Ascending aorta (tissue), 2 donors: ENCODE measurements at regions of chr16 and their contacts with region 1.

Region 1: DNA sequence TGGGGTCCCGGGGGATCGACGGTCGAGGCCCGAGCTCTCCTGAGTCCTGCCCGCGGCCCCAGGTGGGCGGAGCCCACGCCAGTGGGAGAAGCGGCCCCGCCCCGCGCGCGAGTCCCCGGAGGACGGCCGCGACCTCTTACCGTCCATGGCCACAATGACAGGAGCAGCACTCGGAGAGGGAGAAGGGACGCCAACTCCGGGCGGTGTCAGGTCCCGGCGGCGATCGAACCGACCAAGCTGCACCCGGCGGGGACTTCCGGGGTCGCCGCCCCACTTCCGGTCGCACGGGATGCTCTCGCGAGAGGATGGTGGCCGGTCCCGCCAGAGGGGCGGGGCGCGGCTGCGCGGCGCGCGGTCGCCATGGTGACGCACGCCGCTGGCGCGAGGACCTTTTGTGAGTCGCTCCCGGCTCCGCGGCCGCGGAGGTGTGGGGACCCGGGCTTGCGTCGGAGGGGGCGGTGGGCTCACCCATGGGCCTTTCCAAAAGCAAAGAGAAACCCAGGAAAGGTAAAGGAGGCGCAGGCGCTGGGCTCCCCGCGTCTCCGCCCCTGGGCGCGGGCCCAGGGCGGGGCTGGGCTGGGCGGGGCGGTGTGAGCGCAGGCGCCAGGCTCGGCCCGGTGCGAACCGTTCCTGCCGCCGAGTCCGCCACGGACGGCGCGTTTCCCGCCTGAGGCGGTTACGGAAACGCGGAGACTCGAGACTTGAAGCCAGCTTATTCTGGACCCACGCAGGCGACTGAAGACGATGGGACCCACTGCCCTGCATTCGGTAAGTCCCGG is at the starts of genes CHMP1A and SPATA33:
- DNase-seq: peak; percentile 30 to 92
- H3K4me3 ChIP-seq: peak within 1 kb of the TSS; percentile 78 to 95
- H3K27ac ChIP-seq: peak within 1 kb of the TSS; percentile 72 to 93
- H3K4me1 ChIP-seq: peaks cover 3 to 15% of the 10 kb centered on the region in 2 donors
- H3K27me3 ChIP-seq: no peaks in the 10 kb centered on the region
- CTCF ChIP-seq: no peak
- total RNA-seq, gene CHMP1A: 153 TPM
- total RNA-seq, gene SPATA33: 0.21 TPM

Region 2: DNA sequence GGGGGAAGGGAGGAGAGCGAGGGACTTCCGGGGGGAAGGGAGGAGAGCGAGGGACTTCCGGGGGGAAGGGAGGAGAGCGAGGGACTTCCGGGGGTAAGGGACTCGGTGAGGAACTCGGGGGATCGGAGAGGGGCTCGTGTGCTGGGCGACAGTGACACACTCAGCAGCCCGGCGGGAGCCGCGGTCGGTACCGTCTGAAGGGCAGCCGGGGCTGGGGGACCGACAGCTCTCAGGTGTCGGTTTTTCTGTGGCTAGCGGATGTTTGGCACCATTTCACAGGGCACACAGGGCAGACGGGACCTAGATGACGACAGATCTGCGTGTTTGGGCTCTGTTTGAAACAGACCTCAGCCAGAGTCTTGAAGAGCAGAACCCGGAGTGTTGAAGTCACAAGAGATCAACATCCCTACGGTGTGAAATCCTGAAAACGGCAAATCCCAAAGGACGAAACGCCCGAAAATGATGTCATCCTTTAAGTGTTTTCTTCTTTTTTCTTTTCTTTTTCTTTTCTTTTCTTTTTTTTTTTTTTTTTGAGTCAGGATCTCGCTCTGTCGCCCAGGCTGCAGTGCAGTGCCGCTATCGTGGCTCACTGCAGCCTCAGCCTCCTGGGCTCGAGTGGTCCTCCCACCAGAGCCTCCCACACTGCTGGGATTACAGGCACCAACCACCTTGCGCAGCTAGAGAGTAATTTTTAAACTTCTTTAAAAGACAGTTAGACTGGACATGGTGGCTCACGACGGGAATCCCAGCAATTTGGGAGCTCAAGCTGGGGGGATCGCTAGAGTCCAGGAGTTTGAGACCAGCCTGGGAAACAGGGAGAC is 416.2 kb before region 1 on chr16:
- intact Hi-C with region 1: loop called (anchors 10 kb)
- DNase-seq: peak in 1 of 2 donors; percentile 87
- H3K4me3 ChIP-seq: peak overlapping the region; percentile 70 to 79
- H3K27ac ChIP-seq: peak overlapping the region; percentile 95 to 98
- H3K4me1 ChIP-seq: peaks cover 0 to 6% of the 10 kb centered on the region in 2 donors
- H3K27me3 ChIP-seq: no peaks in the 10 kb centered on the region
- CTCF ChIP-seq: no peak

Region 3: GRCh38 chr16:89560378-89561141 is 97.1 kb before region 1 on chr16 and contains the start of gene RPL13:
- intact Hi-C with region 1: loop called (anchors 2 kb)
- DNase-seq: peak; percentile 82 to 98
- H3K4me3 ChIP-seq: peak within 1 kb of the TSS; percentile 66 to 74
- H3K27ac ChIP-seq: peak within 1 kb of the TSS; percentile 95 to 96
- H3K4me1 ChIP-seq: peaks cover 17% of the 10 kb centered on the region in 2 donors
- H3K27me3 ChIP-seq: no peaks in the 10 kb centered on the region
- CTCF ChIP-seq: no peak
- total RNA-seq, gene RPL13: 8,360 TPM

Region 4: GRCh38 chr16:89700100-89700648 is 42.5 kb after region 1 on chr16:
- intact Hi-C with region 1: loop called (anchors 1 kb)
- DNase-seq: peak; percentile 96 to 99
- H3K4me3 ChIP-seq: peak overlapping the region; percentile 76 to 77
- H3K27ac ChIP-seq: peak overlapping the region; percentile 88 to 93
- H3K4me1 ChIP-seq: peaks cover 7 to 20% of the 10 kb centered on the region in 2 donors
- H3K27me3 ChIP-seq: no peaks in the 10 kb centered on the region
- CTCF ChIP-seq: peak; percentile 59 to 83 (median 63)

Region 5: DNA sequence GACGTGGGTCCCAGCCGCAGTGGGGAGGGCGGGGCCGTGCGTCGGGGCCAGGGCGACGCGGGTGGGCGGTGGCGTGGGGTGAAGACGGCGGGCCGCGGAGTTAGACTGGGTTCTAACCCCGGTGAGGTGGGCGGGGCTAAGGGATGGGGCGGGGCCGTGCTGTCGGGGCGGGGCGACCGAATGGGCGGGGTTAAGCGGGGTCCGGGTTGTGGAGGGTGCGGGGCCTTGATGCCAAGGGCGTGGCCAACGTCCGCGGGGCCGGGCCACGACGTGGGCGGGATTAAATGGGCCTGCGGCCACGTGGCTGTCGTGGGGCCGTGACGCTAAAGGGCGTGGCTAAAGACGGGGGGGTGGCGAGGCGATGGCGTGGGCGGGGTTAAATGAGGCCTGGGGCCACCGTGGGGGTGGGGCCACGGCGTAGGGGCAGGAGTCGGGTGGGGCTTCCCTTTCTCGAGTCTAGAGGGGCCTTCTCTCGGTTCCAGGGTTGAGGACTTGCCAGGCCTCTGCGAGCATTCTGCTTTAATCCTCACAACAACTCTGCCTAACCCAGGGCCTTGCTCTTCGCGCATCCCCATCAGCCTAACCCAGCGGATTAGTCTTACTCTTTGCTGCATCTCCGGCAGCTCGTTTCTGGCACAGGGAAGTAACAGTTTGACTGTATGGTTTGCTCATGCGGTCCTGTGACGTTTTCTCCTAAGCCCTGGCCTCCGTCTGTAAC is 216.5 kb after region 1 on chr16:
- intact Hi-C with region 1: loop called (anchors 1 kb)
- DNase-seq: peak; percentile 74 to 97
- H3K4me3 ChIP-seq: peak overlapping the region; percentile 70 to 87
- H3K27ac ChIP-seq: peak overlapping the region; percentile 98 to 100
- H3K4me1 ChIP-seq: peaks cover 0 to 9% of the 10 kb centered on the region in 2 donors
- H3K27me3 ChIP-seq: no peaks in the 10 kb centered on the region
- CTCF ChIP-seq: no peak